IMR-90 (cell line): ENCODE measurements at regions of chrX and their contacts with region 1.

Region 1: GRCh38 chrX:103554687-103555424 is 30.5 kb upstream of the TCEAL4 start:
- DNase-seq: peak; percentile 24
- ATAC-seq: no peak
- H3K4me3 ChIP-seq: peak overlapping the region; percentile 55
- H3K27ac ChIP-seq: no peak overlapping the region
- H3K4me1 ChIP-seq: no peaks in the 10 kb centered on the region
- H3K27me3 ChIP-seq: no peaks in the 10 kb centered on the region
- CTCF ChIP-seq: no peak
- POLR2A ChIP-seq: no peak
- RAD21 ChIP-seq: no peak

Region 2: GRCh38 chrX:103423955-103424638 is 130.8 kb before region 1 on chrX:
- CTCF ChIA-PET with region 1: no interaction called
- POLR2A ChIA-PET with region 1: interaction called, 10 read pairs
- dilution Hi-C with region 1: no loop called
- in situ Hi-C with region 1: no loop called
- intact Hi-C with region 1: no loop called
- DNase-seq: no peak
- ATAC-seq: no peak
- H3K4me3 ChIP-seq: no peak overlapping the region
- H3K27ac ChIP-seq: no peak overlapping the region
- H3K4me1 ChIP-seq: no peaks in the 10 kb centered on the region
- H3K27me3 ChIP-seq: no peaks in the 10 kb centered on the region; the same call in 1 of the 2 replicates
- CTCF ChIP-seq: no peak
- POLR2A ChIP-seq: no peak
- RAD21 ChIP-seq: no peak

Region 3: GRCh38 chrX:103573208-103573607 is 18.4 kb after region 1 on chrX:
- CTCF ChIA-PET with region 1: interaction called, 5 read pairs
- POLR2A ChIA-PET with region 1: no interaction called
- dilution Hi-C with region 1: no loop called
- in situ Hi-C with region 1: no loop called
- intact Hi-C with region 1: loop called (anchors 1 kb)
- DNase-seq: no peak
- ATAC-seq: no peak
- H3K4me3 ChIP-seq: no peak overlapping the region
- H3K27ac ChIP-seq: no peak overlapping the region
- H3K4me1 ChIP-seq: no peaks in the 10 kb centered on the region
- H3K27me3 ChIP-seq: peaks cover 3% of the 10 kb centered on the region; the same call in 1 of the 2 replicates
- CTCF ChIP-seq: no peak
- POLR2A ChIP-seq: no peak
- RAD21 ChIP-seq: no peak

Region 4: GRCh38 chrX:104502460-104502859 is 947.6 kb after region 1 on chrX:
- CTCF ChIA-PET with region 1: no interaction called
- POLR2A ChIA-PET with region 1: no interaction called
- dilution Hi-C with region 1: no loop called
- in situ Hi-C with region 1: no loop called
- intact Hi-C with region 1: no loop called
- DNase-seq: no peak
- ATAC-seq: no peak
- H3K4me3 ChIP-seq: no peak overlapping the region
- H3K27ac ChIP-seq: no peak overlapping the region
- H3K4me1 ChIP-seq: no peaks in the 10 kb centered on the region
- H3K27me3 ChIP-seq: no peaks in the 10 kb centered on the region; the same call in 1 of the 2 replicates
- CTCF ChIP-seq: no peak
- POLR2A ChIP-seq: no peak
- RAD21 ChIP-seq: no peak